Activated CD4-positive, alpha-beta memory T cell treated with anti-CD3 and anti-CD28 coated beads for 36 hours (primary cell): ENCODE measurements at regions of chr6 and their contacts with region 1.

Region 1: GRCh38 chr6:136792410-136793262 is at the start of gene MAP3K5:
- DNase-seq: peak; percentile 97
- H3K4me3 Mint-ChIP-seq: peak within 1 kb of the TSS; percentile 94
- H3K27ac Mint-ChIP-seq: peak within 1 kb of the TSS; percentile 94
- H3K4me1 Mint-ChIP-seq: peaks cover 35% of the 10 kb centered on the region
- H3K27me3 Mint-ChIP-seq: no peaks in the 10 kb centered on the region
- total RNA-seq, gene MAP3K5: 13.2 to 13.8 TPM

Region 2: GRCh38 chr6:136593748-136594490 is 198.7 kb before region 1 on chr6:
- CTCF ChIA-PET with region 1: interaction called, 13 read pairs
- POLR2A ChIA-PET with region 1: interaction called, 5 read pairs
- intact Hi-C with region 1: loop called (anchors 1 kb)
- DNase-seq: peak; percentile 79
- H3K4me3 Mint-ChIP-seq: peak overlapping the region; percentile 57
- H3K27ac Mint-ChIP-seq: peak overlapping the region; percentile 89
- H3K4me1 Mint-ChIP-seq: peaks cover 33% of the 10 kb centered on the region
- H3K27me3 Mint-ChIP-seq: no peaks in the 10 kb centered on the region

Region 3: GRCh38 chr6:136643850-136644596 is 148.6 kb before region 1 on chr6:
- CTCF ChIA-PET with region 1: interaction called, 624 read pairs
- POLR2A ChIA-PET with region 1: interaction called, 71 read pairs
- intact Hi-C with region 1: loop called (anchors 1 kb)
- DNase-seq: peak; percentile 85
- H3K4me3 Mint-ChIP-seq: no peak overlapping the region
- H3K27ac Mint-ChIP-seq: no peak overlapping the region
- H3K4me1 Mint-ChIP-seq: no peaks in the 10 kb centered on the region
- H3K27me3 Mint-ChIP-seq: no peaks in the 10 kb centered on the region

Region 4: DNA sequence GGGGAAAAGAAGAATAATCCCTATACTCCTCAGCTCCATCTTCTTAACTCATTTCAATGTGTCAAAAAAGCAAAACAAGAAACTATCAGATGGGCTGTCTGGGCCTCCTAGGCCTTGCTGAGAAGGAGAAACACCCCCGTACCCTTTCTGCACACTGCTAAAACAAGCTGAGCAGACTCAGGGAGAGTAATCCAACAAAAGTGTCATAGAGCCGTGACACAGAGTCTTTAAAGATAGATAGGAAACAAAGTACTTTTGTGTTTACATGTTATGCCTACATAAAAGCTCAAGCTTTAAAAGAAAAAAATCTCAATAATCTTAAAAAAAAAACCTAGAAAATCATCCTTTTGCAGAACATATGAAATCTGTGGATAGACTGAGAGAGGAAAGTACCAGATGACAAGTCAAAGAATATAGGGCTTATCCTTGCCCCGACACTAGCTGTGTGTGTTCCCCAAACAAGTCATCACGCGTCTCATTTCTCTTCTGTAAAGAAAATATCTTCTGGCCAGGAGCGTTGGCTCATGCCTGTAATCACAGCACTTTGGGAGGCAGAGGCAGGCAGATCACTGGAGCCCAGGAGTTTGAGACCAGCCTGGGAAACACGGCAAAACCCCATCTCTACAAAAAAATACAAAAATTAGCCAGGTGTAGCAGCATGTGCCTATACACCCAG is 81.6 kb before region 1 on chr6:
- CTCF ChIA-PET with region 1: interaction called, 20 read pairs
- POLR2A ChIA-PET with region 1: interaction called, 3 read pairs
- intact Hi-C with region 1: no loop called
- DNase-seq: no peak
- H3K4me3 Mint-ChIP-seq: no peak overlapping the region
- H3K27ac Mint-ChIP-seq: no peak overlapping the region
- H3K4me1 Mint-ChIP-seq: peaks cover 2% of the 10 kb centered on the region
- H3K27me3 Mint-ChIP-seq: no peaks in the 10 kb centered on the region

Region 5: GRCh38 chr6:136745300-136745699 is 47.3 kb before region 1 on chr6:
- CTCF ChIA-PET with region 1: interaction called, 31 read pairs
- POLR2A ChIA-PET with region 1: interaction called, 6 read pairs
- intact Hi-C with region 1: no loop called
- DNase-seq: no peak
- H3K4me3 Mint-ChIP-seq: no peak overlapping the region
- H3K27ac Mint-ChIP-seq: no peak overlapping the region
- H3K4me1 Mint-ChIP-seq: peaks cover 59% of the 10 kb centered on the region
- H3K27me3 Mint-ChIP-seq: no peaks in the 10 kb centered on the region

Region 6: DNA sequence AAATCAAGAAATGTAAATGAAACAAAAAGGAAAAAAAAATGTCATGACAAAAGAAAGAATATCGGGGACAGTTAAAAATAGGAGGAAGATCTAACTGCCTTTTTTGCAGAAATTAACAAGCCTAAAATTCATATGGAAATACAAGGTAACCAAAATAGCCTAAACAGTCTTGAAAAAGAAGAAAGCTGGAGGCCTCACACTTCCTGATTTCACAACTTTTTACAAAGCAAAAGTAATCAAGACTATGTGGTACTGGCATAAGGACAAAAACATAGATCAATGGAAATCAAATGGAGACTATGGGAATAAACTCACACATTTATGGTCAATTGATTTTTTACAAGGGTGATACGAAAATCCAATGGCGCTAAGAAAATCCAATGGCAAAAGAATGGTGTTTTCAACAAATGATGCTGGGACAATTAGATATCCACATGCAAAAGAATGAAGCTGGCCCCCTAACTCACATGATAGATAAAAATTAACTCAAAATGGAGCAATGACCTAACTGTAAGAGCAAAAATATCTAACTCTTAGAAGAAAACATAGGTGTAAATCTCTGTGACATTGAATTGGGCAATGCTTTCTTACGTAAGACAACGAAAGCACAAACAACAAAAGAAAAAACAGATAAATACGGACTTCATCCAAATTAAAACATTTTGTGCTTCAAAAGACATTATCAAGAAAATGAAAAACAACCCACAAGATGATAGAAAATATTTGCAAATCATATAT is 24.9 kb before region 1 on chr6:
- CTCF ChIA-PET with region 1: interaction called, 76 read pairs
- POLR2A ChIA-PET with region 1: interaction called, 15 read pairs
- intact Hi-C with region 1: loop called (anchors 1 kb)
- DNase-seq: no peak
- H3K4me3 Mint-ChIP-seq: no peak overlapping the region
- H3K27ac Mint-ChIP-seq: peak overlapping the region; percentile 66
- H3K4me1 Mint-ChIP-seq: peaks cover 71% of the 10 kb centered on the region
- H3K27me3 Mint-ChIP-seq: no peaks in the 10 kb centered on the region

Region 7: GRCh38 chr6:136822376-136823127 is 29.9 kb after region 1 on chr6 and contains the start of gene PEX7:
- CTCF ChIA-PET with region 1: interaction called, 23 read pairs
- POLR2A ChIA-PET with region 1: interaction called, 7 read pairs
- intact Hi-C with region 1: loop called (anchors 1 kb)
- DNase-seq: peak; percentile 93
- H3K4me3 Mint-ChIP-seq: peak within 1 kb of the TSS; percentile 93
- H3K27ac Mint-ChIP-seq: peak within 1 kb of the TSS; percentile 95
- H3K4me1 Mint-ChIP-seq: peaks cover 17% of the 10 kb centered on the region
- H3K27me3 Mint-ChIP-seq: no peaks in the 10 kb centered on the region
- total RNA-seq, gene PEX7: 5.4 to 6.4 TPM